Naive thymus-derived CD8-positive, alpha-beta T cell (primary cell): ENCODE measurements at regions of chr4 and their contacts with region 1.

Region 1: GRCh38 chr4:109559983-109560686 is at the start of gene MCUB:
- DNase-seq: peak; percentile 84 to 96 (median 92)
- ATAC-seq: peak; percentile 88 to 95
- H3K4me3 Mint-ChIP-seq: peak within 1 kb of the TSS; percentile 84 to 99 (median 98)
- H3K27ac Mint-ChIP-seq: peak within 1 kb of the TSS; percentile 94 to 99 (median 97)
- H3K4me1 Mint-ChIP-seq: peaks cover 12 to 62% (median 58%) of the 10 kb centered on the region in 4 donors
- H3K27me3 Mint-ChIP-seq: no peaks in the 10 kb centered on the region
- polyA plus RNA-seq, gene MCUB: 160 to 201 (median 197) TPM

Region 2: GRCh38 chr4:109433205-109434006 is 126.7 kb before region 1 on chr4 and contains the start of gene SEC24B:
- POLR2A ChIA-PET with region 1: interaction called, 16 read pairs
- DNase-seq: peak; percentile 85 to 94 (median 90)
- ATAC-seq: peak; percentile 89
- H3K4me3 Mint-ChIP-seq: peak within 1 kb of the TSS; percentile 77 to 95 (median 90)
- H3K27ac Mint-ChIP-seq: peak within 1 kb of the TSS; percentile 86 to 97 (median 94)
- H3K4me1 Mint-ChIP-seq: peaks cover 14 to 53% (median 51%) of the 10 kb centered on the region in 4 donors
- H3K27me3 Mint-ChIP-seq: no peaks in the 10 kb centered on the region
- polyA plus RNA-seq, gene SEC24B: 8.3 to 17.2 (median 10.5) TPM

Region 3: DNA sequence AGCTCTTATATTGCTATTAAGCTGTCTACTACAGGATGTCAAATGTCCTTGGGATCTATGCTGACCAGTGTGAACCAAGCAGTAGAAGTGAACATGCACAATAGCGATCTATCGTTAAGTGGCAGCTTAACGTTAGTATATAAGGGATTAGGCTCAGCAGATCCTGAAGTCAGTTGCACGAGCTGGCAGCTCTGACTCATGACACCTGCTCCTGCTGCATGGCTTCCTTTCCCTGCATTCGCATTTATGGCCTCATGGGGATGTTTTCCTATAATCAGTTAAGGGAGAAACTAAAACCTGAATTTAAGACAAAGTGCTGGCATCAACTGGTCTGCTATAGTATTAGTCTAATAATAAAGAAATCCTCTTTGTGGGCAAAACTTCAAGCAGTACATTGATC is 12.7 kb before region 1 on chr4:
- POLR2A ChIA-PET with region 1: interaction called, 12 read pairs
- DNase-seq: no peak
- ATAC-seq: no peak
- H3K4me3 Mint-ChIP-seq: no peak overlapping the region
- H3K27ac Mint-ChIP-seq: peak overlapping the region in 2 of 10 donors; percentile 1 to 11
- H3K4me1 Mint-ChIP-seq: peaks cover 15 to 38% (median 32%) of the 10 kb centered on the region in 4 donors
- H3K27me3 Mint-ChIP-seq: no peaks in the 10 kb centered on the region

Region 4: DNA sequence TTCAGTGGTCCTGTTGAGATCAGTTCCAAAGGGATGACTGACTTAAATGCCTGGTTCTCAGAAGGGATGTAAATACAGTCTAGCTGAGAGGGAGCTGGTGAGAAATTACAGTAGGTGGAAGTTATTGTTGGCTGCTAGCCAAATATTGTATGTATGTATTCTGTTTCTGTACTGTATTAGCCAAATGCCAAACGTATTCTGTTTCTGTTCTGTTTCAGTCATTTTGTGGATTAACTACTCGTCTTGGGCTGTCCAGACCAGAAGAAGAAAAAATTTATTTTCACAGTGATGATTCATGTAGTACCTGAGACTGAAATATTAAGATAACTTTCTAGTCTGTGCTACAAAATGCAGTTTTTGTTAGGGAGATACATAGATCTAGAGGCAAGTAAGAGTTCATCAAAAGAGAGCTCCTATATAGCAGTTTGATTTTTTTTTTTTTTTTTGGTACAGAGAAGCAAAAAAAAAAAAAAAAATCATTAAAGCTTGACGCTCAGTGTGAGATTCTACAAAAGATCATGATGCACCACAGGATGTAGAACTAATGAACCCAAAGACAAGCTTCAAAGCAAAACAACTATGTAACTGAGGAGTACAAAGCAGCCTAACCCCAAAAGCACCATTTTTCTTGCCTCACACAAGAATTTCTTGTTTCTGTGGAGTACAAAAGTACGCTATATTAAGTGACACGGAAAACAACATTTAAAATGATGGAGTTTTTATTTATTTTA is 88.3 kb after region 1 on chr4:
- POLR2A ChIA-PET with region 1: interaction called, 54 read pairs
- DNase-seq: peak in 8 of 10 donors; percentile 20 to 88 (median 68)
- ATAC-seq: peak; percentile 84 to 96
- H3K4me3 Mint-ChIP-seq: peak overlapping the region in 9 of 10 donors; percentile 29 to 86 (median 75)
- H3K27ac Mint-ChIP-seq: peak overlapping the region in 6 of 10 donors; percentile 89 to 96 (median 92)
- H3K4me1 Mint-ChIP-seq: peaks cover 19 to 48% (median 43%) of the 10 kb centered on the region in 4 donors
- H3K27me3 Mint-ChIP-seq: no peaks in the 10 kb centered on the region

Region 5: GRCh38 chr4:109702950-109703663 is 143.0 kb after region 1 on chr4 and contains the start of gene CASP6:
- POLR2A ChIA-PET with region 1: interaction called, 11 read pairs
- DNase-seq: peak; percentile 62 to 82 (median 73)
- ATAC-seq: peak; percentile 84 to 90
- H3K4me3 Mint-ChIP-seq: peak within 1 kb of the TSS; percentile 90 to 98 (median 94)
- H3K27ac Mint-ChIP-seq: peak within 1 kb of the TSS; percentile 82 to 96 (median 94)
- H3K4me1 Mint-ChIP-seq: peaks cover 28 to 48% (median 42%) of the 10 kb centered on the region in 4 donors
- H3K27me3 Mint-ChIP-seq: no peaks in the 10 kb centered on the region
- polyA plus RNA-seq, gene CASP6: 57.2 to 87.7 (median 73.6) TPM